ENCODE measurements at regions of chr2 and their contacts with region 1.

Region 1: GRCh38 chr2:191691016-191691735 is 13.2 kb downstream of the NABP1 start:
- DNase-seq: peak; percentile 91
- H3K4me3 ChIP-seq: no peak overlapping the region
- H3K27ac ChIP-seq: peak overlapping the region; percentile 8
- H3K4me1 ChIP-seq: peaks cover 23% of the 10 kb centered on the region
- H3K27me3 ChIP-seq: no peaks in the 10 kb centered on the region
- CTCF ChIP-seq: peak; percentile 61 to 72
- POLR2A ChIP-seq: peak; percentile 71

Region 2: GRCh38 chr2:191566344-191566743 is 124.8 kb before region 1 on chr2:
- CTCF ChIA-PET with region 1: interaction called, 44 read pairs
- POLR2A ChIA-PET with region 1: no interaction called
- dilution Hi-C with region 1: no loop called
- intact Hi-C with region 1: loop called (anchors 1 kb)
- DNase-seq: peak; percentile 54
- H3K4me3 ChIP-seq: no peak overlapping the region
- H3K27ac ChIP-seq: no peak overlapping the region
- H3K4me1 ChIP-seq: peaks cover 3% of the 10 kb centered on the region
- H3K27me3 ChIP-seq: peaks cover 6 to 16% of the 10 kb centered on the region in 2 experiments
- CTCF ChIP-seq: peak; percentile 64 to 82
- POLR2A ChIP-seq: no peak

Region 3: DNA sequence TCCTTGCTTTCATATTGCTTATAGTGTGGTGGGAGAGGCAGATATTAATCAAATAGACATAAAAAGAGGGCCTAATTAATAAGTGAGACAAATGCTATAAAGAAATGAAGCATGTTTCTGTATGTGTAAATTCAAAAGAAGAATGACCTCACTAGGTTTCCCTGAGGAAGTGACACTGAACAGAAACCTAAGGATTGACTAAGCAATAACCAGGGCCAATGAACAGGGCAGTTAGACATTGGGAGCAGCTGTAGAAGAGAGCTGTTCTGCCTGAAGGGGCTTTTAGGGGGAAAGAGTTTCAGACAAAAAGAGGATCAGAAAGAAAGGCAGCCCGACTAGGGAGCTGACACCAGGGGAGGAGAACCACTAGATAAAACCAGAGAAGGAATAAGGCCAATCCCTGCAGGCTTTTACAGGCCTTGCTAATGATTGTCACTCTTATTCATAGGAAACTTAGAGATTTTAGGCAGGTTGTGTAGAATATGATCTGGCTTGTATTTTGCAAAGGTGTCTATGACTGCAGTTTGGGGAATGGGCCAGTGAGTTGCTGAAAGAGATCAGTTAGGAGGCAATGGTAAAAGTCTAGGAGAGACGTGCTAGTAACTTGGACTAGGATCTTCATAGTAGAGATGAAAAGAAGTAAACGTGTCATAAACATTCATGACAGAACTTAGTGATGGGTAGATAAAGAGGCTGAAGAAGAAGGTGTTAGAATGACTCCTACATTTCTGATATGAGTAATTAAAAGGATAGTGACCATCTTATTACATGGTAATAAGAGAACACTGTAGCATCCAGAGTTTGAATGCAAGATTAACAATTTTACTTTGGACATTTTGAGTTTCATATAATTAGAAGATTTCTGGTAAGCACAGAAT is 40.0 kb before region 1 on chr2:
- CTCF ChIA-PET with region 1: no interaction called
- POLR2A ChIA-PET with region 1: no interaction called
- dilution Hi-C with region 1: no loop called
- intact Hi-C with region 1: no loop called
- DNase-seq: peak; percentile 24
- H3K4me3 ChIP-seq: no peak overlapping the region
- H3K27ac ChIP-seq: no peak overlapping the region
- H3K4me1 ChIP-seq: no peaks in the 10 kb centered on the region
- H3K27me3 ChIP-seq: no peaks in the 10 kb centered on the region
- CTCF ChIP-seq: no peak
- POLR2A ChIP-seq: no peak